Gastrocnemius medialis (tissue), 4 donors: ENCODE measurements at regions of chr2 and their contacts with region 1.

Region 1: GRCh38 chr2:144456680-144457079 is 63.2 kb downstream of the ZEB2 start:
- DNase-seq: peak; percentile 44 to 63
- ATAC-seq: peak; percentile 98 to 99
- H3K4me3 ChIP-seq: no peak overlapping the region
- H3K27ac ChIP-seq: no peak overlapping the region
- H3K4me1 ChIP-seq: peaks cover 25 to 40% of the 10 kb centered on the region in 2 donors
- H3K27me3 ChIP-seq: no peaks in the 10 kb centered on the region
- CTCF ChIP-seq: no peak
- POLR2A ChIP-seq: no peak

Region 2: DNA sequence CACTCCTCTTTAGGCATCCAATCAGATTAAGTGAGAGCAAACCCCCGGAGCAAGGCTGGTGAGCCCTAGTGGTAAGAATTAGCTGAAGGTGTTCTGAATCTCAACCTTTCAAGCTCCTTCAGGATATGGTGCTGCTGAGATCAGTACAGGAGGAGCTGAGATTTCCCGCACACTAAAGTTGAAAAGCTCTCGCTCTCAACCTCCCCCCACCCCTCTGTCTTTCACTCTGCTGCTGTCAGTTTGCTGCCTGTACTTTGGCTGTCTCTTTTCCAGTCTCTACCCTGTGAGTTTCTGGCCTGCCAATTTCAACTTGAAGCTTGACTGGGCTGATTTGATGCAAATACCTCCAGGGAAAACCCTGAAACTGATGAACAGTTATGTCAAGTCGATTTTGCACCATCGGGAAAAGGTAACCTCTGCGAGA is 47.5 kb after region 1 on chr2:
- in situ Hi-C with region 1: no loop called
- intact Hi-C with region 1: loop called (anchors 5 kb)
- DNase-seq: no peak
- ATAC-seq: no peak
- H3K4me3 ChIP-seq: peak overlapping the region in 2 of 4 donors; percentile 7 to 15
- H3K27ac ChIP-seq: peak overlapping the region; percentile 52 to 96 (median 95)
- H3K4me1 ChIP-seq: peaks cover 54 to 71% of the 10 kb centered on the region in 2 donors
- H3K27me3 ChIP-seq: no peaks in the 10 kb centered on the region
- CTCF ChIP-seq: peak in 3 of 5 experiments; percentile 12 to 22 (median 22)
- POLR2A ChIP-seq: no peak

Region 3: GRCh38 chr2:144516981-144517865 is 60.5 kb after region 1 on chr2:
- in situ Hi-C with region 1: loop called in 1 of 4 experiments (anchors 10 kb)
- intact Hi-C with region 1: loop called (anchors 5 kb)
- DNase-seq: peak; percentile 65 to 68
- ATAC-seq: peak; percentile 64 to 76
- H3K4me3 ChIP-seq: peak overlapping the region; percentile 76 to 89 (median 78)
- H3K27ac ChIP-seq: peak overlapping the region; percentile 94 to 96 (median 95)
- H3K4me1 ChIP-seq: peaks cover 34 to 44% of the 10 kb centered on the region in 2 donors
- H3K27me3 ChIP-seq: peaks cover 0 to 13% (median 0%) of the 10 kb centered on the region in 3 donors
- CTCF ChIP-seq: no peak
- POLR2A ChIP-seq: peak; percentile 43 to 75

Region 4: DNA sequence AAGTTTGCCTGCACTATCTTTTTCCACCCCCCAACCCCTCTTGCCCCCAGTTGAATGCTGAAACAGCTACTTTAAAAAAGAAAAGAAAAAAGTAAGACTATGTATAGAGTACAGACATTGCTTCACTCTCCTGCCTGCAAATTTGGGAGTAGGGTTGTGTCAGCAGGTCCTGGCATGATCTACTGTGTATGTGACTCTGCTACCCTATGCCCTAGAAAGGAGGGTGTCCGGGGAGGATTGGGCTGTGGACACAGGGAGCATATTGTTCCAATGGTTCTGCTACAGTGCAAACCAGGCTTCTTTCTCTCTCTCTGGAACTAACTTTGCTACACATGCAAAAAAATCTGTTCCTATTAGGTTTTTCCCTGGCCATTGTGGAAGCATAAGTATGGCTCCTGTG is 73.2 kb after region 1 on chr2:
- in situ Hi-C with region 1: no loop called
- intact Hi-C with region 1: no loop called
- DNase-seq: no peak
- ATAC-seq: peak in 1 of 2 donors; percentile 62
- H3K4me3 ChIP-seq: no peak overlapping the region
- H3K27ac ChIP-seq: no peak overlapping the region
- H3K4me1 ChIP-seq: no peaks in the 10 kb centered on the region
- H3K27me3 ChIP-seq: peaks cover 0 to 3% (median 0%) of the 10 kb centered on the region in 3 donors
- CTCF ChIP-seq: no peak
- POLR2A ChIP-seq: no peak

Region 5: DNA sequence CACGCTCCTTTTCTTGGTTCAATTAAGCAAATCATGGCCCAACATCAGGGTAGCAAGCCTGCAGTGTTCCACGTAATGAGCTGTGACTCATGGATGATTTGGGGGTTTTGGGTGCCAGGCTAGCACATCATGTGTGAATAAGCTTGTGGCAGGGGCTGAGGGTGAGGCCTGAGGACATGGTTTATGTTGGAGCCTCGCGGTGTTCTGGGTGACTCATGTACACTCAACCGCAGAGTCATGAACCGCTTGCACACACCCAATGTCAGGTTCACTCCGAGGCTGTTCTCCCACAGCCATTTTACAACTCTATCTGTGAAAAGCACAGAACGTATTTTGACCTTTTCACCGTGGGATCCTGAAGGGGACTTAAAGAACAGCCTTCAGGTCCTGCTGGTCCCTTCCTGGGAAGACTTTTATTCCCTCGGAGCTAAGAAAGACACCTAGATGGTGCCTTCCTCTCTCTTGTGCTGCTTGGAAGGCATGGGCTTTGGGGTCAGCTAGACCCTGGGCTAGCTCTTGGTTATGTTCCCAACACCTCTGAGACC is 203.1 kb after region 1 on chr2:
- in situ Hi-C with region 1: no loop called
- intact Hi-C with region 1: no loop called
- DNase-seq: peak in 1 of 2 donors; percentile 6
- ATAC-seq: no peak
- H3K4me3 ChIP-seq: no peak overlapping the region
- H3K27ac ChIP-seq: no peak overlapping the region
- H3K4me1 ChIP-seq: no peaks in the 10 kb centered on the region
- H3K27me3 ChIP-seq: no peaks in the 10 kb centered on the region
- CTCF ChIP-seq: no peak
- POLR2A ChIP-seq: no peak